GM10248 (cell line): ENCODE measurements at regions of chr3 and their contacts with region 1.

Region 1: GRCh38 chr3:58167431-58168351 is 43.1 kb downstream of the DNASE1L3 start:
- DNase-seq: peak; percentile 83
- CTCF ChIP-seq: peak; percentile 85

Region 2: DNA sequence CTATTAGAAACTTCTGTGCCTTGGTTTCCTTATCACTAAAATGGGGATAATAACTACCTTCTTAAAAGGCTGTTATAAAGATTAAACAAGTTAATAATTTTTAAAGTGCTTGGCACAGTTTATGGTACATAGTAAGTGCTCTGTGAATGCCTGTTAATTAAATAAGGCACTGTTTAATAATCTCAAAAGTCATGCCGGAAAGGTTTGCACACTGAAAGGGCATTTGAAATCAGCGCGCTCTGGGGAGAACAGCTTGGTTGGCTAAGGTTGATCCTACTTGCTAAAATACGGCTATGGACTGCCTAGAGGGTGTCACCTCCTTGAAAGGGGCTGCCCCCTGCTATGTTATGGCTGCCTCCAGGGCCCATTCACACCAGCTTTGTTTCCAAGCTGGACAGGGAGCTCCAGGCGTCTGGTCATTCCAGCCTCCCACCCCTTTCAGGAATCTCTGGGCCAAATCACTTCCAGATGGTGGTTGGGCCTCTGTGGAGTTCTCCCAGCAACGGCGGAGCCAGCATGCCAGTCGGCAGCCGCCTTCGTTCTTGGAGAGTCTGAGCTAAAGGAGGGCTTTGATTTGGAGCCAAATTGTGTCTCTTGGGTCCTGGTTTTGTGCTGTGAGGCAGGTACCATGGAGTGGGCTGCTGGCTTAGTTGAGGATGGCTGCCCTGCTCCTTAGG is 153.6 kb before region 1 on chr3:
- CTCF ChIA-PET with region 1: interaction called, 67 read pairs
- POLR2A ChIA-PET with region 1: no interaction called
- DNase-seq: no peak
- CTCF ChIP-seq: no peak

Region 3: GRCh38 chr3:58392181-58392580 is 224.5 kb after region 1 on chr3:
- CTCF ChIA-PET with region 1: no interaction called
- POLR2A ChIA-PET with region 1: no interaction called
- DNase-seq: no peak
- CTCF ChIP-seq: no peak

Region 4: DNA sequence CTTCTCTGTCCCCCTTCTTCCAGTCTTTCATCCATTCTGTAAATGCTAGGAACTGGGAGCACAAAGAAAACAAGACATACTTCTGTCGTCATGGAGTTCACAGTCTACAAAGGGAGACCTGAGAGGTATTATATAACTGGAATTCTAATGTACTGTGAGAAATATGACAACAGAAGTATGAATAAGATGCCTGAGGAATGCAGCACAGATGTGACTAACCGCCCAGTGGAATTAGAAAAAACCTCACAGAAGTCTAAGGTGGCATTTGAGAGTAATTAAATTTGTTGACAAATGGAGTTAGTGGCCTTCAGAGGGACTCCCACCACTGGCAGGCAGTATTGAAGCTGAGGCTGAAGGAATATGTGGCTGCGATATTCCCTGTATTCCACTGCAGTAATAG is 667.4 kb after region 1 on chr3:
- CTCF ChIA-PET with region 1: no interaction called
- POLR2A ChIA-PET with region 1: no interaction called
- DNase-seq: no peak
- CTCF ChIP-seq: no peak